Calu3 (cell line): ENCODE measurements at regions of chr17 and their contacts with region 1.

Region 1: DNA sequence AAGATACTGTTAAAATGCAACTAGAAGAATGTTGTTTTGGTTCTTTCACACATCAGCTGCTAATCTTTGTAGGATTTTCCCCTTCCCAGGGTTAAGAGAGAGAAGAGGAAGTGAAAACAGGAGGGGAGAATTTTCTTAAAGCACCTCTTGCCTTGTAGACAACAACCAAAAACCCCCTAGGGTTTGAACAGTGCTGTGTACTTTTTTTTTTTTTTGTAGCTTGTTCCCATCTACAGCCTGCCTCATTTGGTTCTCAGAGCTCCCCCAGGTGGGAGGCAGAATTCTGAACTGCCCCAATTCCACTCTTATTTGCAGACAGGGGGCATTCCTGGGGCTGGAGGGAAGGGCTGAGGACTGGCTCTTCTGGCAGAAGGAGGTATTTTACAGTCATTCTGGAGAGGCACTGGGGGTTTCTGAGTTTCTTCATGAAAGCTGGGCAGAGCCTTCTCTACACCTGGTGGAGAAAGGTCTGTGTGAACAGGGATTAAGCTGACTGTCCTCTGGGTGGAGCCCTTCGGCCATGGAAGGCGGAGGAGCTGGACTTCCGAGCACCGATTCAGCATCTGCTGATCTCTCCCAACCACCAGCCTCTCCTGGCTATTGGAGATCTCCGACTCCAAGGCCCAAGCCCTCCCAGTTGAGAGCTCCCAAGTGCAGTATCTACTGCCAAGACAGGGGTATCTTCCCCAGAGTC is 32.2 kb downstream of the SMARCE1 start:
- DNase-seq: peak; percentile 100
- H3K4me3 Mint-ChIP-seq: no peak overlapping the region
- H3K27ac Mint-ChIP-seq: no peak overlapping the region
- H3K4me1 Mint-ChIP-seq: peaks cover 26% of the 10 kb centered on the region
- H3K27me3 Mint-ChIP-seq: peaks cover 97% of the 10 kb centered on the region
- CTCF ChIP-seq: no peak

Region 2: DNA sequence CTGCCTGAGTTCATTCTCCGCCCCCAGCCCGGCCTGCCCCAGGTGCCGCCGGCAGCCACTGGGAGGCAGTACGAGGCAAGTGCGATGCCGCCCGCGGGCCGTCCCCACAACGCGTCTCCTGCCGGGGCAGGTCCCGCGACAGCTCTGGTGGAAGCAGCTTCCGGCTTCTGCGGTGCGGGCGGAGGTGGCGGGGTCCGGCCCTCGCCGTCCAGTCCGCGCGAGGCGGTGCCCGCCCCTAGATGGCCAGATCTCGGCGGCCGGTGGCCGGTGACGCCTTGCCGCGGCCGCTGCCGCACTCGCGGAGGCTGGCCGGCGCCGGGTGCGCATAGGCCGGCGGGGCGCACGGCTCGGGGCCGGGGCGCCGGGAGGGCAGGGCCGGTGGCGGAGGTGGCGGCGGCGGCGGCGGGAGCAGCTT is 252.7 kb before region 1 on chr17:
- CTCF ChIA-PET with region 1: interaction called, 10 read pairs
- intact Hi-C with region 1: loop called (anchors 1 kb)
- DNase-seq: peak; percentile 100
- H3K4me3 Mint-ChIP-seq: peak overlapping the region; percentile 81
- H3K27ac Mint-ChIP-seq: no peak overlapping the region
- H3K4me1 Mint-ChIP-seq: peaks cover 39% of the 10 kb centered on the region
- H3K27me3 Mint-ChIP-seq: peaks cover 9% of the 10 kb centered on the region
- CTCF ChIP-seq: no peak

Region 3: DNA sequence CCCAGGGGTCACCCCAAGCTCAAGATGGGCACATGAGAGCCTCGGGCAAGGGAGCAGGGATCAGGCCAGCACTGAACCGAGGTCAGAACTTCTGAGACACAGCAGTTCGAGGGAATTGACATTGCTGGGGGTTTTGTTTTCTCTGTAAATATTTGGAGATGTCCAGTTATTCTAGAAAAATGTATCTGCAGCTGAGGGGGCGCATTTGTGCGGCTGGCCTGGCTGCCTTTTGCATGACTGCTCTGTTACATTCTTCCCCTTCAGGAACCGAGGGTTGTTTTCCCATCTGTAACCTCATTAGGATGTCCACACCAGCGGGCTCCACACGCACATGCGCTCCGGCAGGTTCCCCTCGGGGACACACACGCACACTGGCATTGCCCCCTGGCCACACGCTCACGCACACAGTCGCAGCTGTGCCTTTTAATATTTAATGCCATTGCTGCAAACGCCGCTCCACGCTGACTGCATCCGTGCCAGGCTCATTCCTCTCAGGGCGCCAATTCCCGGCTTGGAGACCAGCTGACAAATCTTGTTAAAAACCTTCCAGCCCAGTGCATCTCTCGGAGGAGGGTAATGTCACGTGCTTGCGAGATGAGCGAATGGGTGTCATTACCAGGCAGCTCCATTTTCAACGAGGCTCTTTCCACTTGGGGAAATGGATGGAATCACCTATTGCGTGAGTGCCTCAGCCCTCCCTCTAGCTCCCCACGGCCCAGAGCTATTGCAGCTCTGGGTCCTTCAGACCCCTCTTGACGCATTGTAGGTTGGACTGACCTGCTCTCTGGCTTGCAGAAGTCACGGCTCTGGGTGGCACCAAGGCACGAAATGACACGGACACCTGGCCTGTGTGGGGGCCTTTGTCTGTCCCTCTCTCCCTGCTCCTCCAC is 63.3 kb before region 1 on chr17:
- CTCF ChIA-PET with region 1: interaction called, 15 read pairs
- intact Hi-C with region 1: no loop called
- DNase-seq: no peak
- H3K4me3 Mint-ChIP-seq: no peak overlapping the region
- H3K27ac Mint-ChIP-seq: no peak overlapping the region
- H3K4me1 Mint-ChIP-seq: peaks cover 20% of the 10 kb centered on the region
- H3K27me3 Mint-ChIP-seq: peaks cover 60% of the 10 kb centered on the region
- CTCF ChIP-seq: no peak

Region 4: DNA sequence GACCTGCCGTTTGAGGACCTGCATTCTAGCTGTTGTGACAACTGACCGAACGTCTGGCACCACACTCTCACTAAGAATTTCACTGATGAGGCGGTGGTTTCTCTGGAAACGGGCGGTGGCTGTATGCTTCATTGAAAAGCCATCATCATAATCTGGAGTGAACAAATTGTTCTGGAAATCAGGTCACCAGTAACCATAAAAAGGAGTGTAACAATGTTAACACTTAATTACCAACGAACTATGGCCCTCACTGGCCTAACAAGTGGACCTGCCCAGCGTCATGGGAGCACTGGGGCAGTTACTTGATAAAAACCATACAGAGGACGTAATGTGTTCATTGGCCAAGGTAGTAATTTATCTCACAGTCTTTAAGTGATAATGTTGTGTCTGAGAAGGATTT is 16.8 kb after region 1 on chr17:
- CTCF ChIA-PET with region 1: interaction called, 262 read pairs
- intact Hi-C with region 1: loop called (anchors 1 kb)
- DNase-seq: peak; percentile 4
- H3K4me3 Mint-ChIP-seq: no peak overlapping the region
- H3K27ac Mint-ChIP-seq: no peak overlapping the region
- H3K4me1 Mint-ChIP-seq: no peaks in the 10 kb centered on the region
- H3K27me3 Mint-ChIP-seq: no peaks in the 10 kb centered on the region
- CTCF ChIP-seq: no peak

Region 5: GRCh38 chr17:40714473-40714872 is 99.0 kb after region 1 on chr17:
- CTCF ChIA-PET with region 1: interaction called, 15 read pairs
- intact Hi-C with region 1: no loop called
- DNase-seq: no peak
- H3K4me3 Mint-ChIP-seq: no peak overlapping the region
- H3K27ac Mint-ChIP-seq: no peak overlapping the region
- H3K4me1 Mint-ChIP-seq: no peaks in the 10 kb centered on the region
- H3K27me3 Mint-ChIP-seq: peaks cover 60% of the 10 kb centered on the region
- CTCF ChIP-seq: peak; percentile 66

Region 6: DNA sequence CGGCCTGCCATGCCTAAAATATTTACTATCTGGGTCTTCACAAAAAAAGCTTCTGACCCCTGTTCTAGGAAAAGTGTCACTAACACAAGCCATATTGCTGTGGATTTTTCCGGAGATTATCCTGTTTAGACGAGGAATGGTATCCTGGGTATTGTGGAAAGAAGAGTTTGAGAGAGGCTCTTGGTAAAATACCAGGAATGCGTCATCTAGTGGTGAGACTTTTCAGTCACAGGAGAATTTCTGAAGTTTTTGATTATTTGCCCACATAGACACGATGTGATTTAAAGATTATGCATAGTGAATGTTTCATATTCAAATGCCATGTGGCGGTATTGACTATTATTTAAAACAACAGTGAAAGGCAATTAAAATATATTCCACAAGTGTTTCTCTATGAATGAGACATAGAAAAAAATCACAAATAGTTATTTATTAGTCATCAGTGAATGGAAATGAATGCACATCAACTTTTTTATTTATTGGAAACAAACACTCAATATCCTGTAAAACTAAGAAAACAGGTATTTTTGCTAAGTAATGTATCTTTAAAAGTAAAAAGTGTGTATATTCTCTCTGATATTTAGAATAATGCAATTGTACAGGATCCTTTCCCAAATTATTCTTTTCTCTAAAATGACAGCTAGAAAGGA is 176.5 kb after region 1 on chr17:
- CTCF ChIA-PET with region 1: interaction called, 76 read pairs
- intact Hi-C with region 1: loop called (anchors 1 kb)
- DNase-seq: peak; percentile 59
- H3K4me3 Mint-ChIP-seq: no peak overlapping the region
- H3K27ac Mint-ChIP-seq: no peak overlapping the region
- H3K4me1 Mint-ChIP-seq: no peaks in the 10 kb centered on the region
- H3K27me3 Mint-ChIP-seq: peaks cover 40% of the 10 kb centered on the region
- CTCF ChIP-seq: peak; percentile 100

Region 7: DNA sequence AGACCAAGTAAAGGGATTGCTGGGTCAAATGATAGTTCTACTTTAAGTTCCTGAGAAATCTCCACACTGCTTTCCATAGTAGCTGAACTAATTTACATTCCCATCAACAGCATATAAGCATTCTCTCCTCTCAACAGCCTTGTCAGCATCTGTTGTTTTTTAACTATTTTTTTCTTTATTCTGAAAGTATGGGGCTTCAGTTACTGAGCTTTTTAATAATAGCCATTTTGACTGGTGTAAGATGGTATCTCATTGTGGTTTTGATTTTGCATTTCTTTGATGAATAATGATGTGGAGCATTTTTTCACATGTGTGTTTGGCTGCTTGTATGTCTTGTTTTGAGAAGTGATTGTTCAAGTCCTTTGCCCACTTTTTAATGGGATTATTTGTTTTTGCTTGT is 437.1 kb after region 1 on chr17:
- CTCF ChIA-PET with region 1: no interaction called
- intact Hi-C with region 1: no loop called
- DNase-seq: no peak
- H3K4me3 Mint-ChIP-seq: no peak overlapping the region
- H3K27ac Mint-ChIP-seq: no peak overlapping the region
- H3K4me1 Mint-ChIP-seq: peaks cover 26% of the 10 kb centered on the region
- H3K27me3 Mint-ChIP-seq: no peaks in the 10 kb centered on the region
- CTCF ChIP-seq: no peak